Activated CD4-positive, alpha-beta T cell treated with anti-CD3 and anti-CD28 coated beads, Interleukin-2, amount 10 ng/mL, durations not matched to agents 7 days and 5 days (primary cell): ENCODE measurements at regions of chr19 and their contacts with region 1.

Region 1: GRCh38 chr19:29714953-29715700 is at the start of gene C19orf12:
- DNase-seq: peak; percentile 46
- H3K4me3 Mint-ChIP-seq: peak within 1 kb of the TSS; percentile 94
- H3K27ac Mint-ChIP-seq: peak within 1 kb of the TSS; percentile 99
- H3K4me1 Mint-ChIP-seq: peaks cover 57% of the 10 kb centered on the region
- H3K27me3 Mint-ChIP-seq: no peaks in the 10 kb centered on the region
- total RNA-seq, gene C19orf12: 36.5 to 38.8 TPM

Region 2: GRCh38 chr19:29622138-29623070 is 92.7 kb before region 1 on chr19:
- CTCF ChIA-PET with region 1: interaction called, 11 read pairs
- POLR2A ChIA-PET with region 1: no interaction called
- DNase-seq: peak; percentile 53
- H3K4me3 Mint-ChIP-seq: peak overlapping the region; percentile 77
- H3K27ac Mint-ChIP-seq: peak overlapping the region; percentile 97
- H3K4me1 Mint-ChIP-seq: peaks cover 57% of the 10 kb centered on the region
- H3K27me3 Mint-ChIP-seq: no peaks in the 10 kb centered on the region

Region 3: GRCh38 chr19:29665215-29665825 is 49.8 kb before region 1 on chr19 and contains the start of gene PLEKHF1:
- CTCF ChIA-PET with region 1: interaction called, 27 read pairs
- POLR2A ChIA-PET with region 1: no interaction called
- DNase-seq: peak; percentile 85
- H3K4me3 Mint-ChIP-seq: peak within 1 kb of the TSS; percentile 88
- H3K27ac Mint-ChIP-seq: peak within 1 kb of the TSS; percentile 95
- H3K4me1 Mint-ChIP-seq: peaks cover 69% of the 10 kb centered on the region
- H3K27me3 Mint-ChIP-seq: no peaks in the 10 kb centered on the region
- total RNA-seq, gene PLEKHF1: 49.4 to 52.1 TPM

Region 4: GRCh38 chr19:29671393-29672160 is 43.5 kb before region 1 on chr19:
- CTCF ChIA-PET with region 1: interaction called, 27 read pairs
- POLR2A ChIA-PET with region 1: interaction called, 5 read pairs
- DNase-seq: peak; percentile 88
- H3K4me3 Mint-ChIP-seq: peak overlapping the region; percentile 88
- H3K27ac Mint-ChIP-seq: peak overlapping the region; percentile 95
- H3K4me1 Mint-ChIP-seq: peaks cover 86% of the 10 kb centered on the region
- H3K27me3 Mint-ChIP-seq: no peaks in the 10 kb centered on the region

Region 5: DNA sequence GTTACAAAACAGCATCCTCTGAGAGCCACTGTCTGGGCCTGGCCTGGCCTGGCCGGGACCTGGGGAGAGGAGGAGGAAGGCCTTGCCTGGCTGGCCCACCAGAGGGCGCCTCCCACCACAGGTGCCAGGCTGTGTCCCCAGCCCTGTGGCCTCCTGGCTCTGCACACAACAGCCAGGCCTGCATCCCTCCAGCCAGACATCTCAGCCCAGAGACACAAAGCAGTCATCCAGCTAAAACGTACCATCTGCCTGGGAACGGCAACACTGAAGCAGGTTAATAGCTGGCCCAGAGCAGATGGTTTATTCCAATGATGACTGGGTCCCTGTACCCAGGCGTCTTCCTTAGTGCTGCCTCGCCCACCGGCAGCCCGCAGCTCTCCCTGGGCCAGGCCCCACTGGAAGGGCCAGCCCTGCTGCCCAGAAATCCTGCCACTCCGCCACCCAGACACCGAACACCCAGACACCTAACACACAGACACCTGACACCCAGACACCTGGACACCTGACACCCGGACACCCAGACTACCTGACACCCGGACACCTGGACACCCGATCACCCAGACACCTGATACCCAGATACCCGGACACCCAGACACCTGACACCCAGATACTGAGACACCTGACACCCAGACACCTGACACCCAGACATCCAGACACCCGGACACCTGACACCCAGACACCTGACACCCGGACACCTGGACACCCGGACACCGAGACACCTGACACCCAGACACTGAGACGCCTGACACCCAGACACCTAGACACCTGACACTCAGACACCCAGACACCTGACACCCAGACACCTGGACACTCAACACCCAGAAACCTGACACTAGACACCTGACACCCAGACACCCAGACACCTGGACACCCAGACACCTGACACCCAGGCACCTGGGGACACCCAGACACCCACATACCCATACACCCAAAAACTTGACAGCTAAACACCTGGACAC is 20.2 kb before region 1 on chr19:
- CTCF ChIA-PET with region 1: interaction called, 28 read pairs
- POLR2A ChIA-PET with region 1: interaction called, 3 read pairs
- DNase-seq: peak; percentile 84
- H3K4me3 Mint-ChIP-seq: no peak overlapping the region
- H3K27ac Mint-ChIP-seq: peak overlapping the region; percentile 67
- H3K4me1 Mint-ChIP-seq: peaks cover 22% of the 10 kb centered on the region
- H3K27me3 Mint-ChIP-seq: no peaks in the 10 kb centered on the region

Region 6: DNA sequence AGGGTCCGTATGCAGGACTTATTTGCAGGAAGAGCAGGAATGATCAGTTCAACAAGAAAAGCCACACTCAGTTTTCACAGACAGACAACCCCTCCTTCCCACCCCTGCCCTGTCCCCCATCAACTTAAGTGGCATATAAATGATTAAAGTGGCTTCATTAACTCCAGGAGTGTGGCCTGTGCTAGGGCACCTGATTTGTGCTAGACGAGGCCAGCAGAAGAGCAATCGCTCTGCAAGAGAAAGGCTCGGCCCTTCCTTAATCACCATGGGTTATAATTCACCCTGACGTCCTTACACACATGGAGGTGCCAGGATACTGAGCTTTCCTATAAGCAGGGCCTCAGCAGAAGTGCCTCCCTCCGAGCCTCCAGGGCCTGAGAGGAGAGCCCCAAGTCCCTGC is 14.6 kb before region 1 on chr19:
- CTCF ChIA-PET with region 1: interaction called, 24 read pairs
- POLR2A ChIA-PET with region 1: no interaction called
- DNase-seq: no peak
- H3K4me3 Mint-ChIP-seq: no peak overlapping the region
- H3K27ac Mint-ChIP-seq: no peak overlapping the region
- H3K4me1 Mint-ChIP-seq: peaks cover 22% of the 10 kb centered on the region
- H3K27me3 Mint-ChIP-seq: no peaks in the 10 kb centered on the region

Region 7: GRCh38 chr19:29745253-29745652 is 30.1 kb after region 1 on chr19:
- CTCF ChIA-PET with region 1: no interaction called
- POLR2A ChIA-PET with region 1: no interaction called
- DNase-seq: no peak
- H3K4me3 Mint-ChIP-seq: no peak overlapping the region
- H3K27ac Mint-ChIP-seq: no peak overlapping the region
- H3K4me1 Mint-ChIP-seq: no peaks in the 10 kb centered on the region
- H3K27me3 Mint-ChIP-seq: peaks cover 6% of the 10 kb centered on the region